Natural killer cell (primary cell): ENCODE measurements at regions of chr22 and their contacts with region 1.

Region 1: GRCh38 chr22:20981787-20982562 is at the start of gene LZTR1:
- DNase-seq: peak; percentile 77 to 81
- ATAC-seq: peak; percentile 75 to 87 (median 85)
- H3K4me3 ChIP-seq: peak within 1 kb of the TSS; percentile 78
- H3K4me3 Mint-ChIP-seq: peak within 1 kb of the TSS; percentile 92
- H3K27ac ChIP-seq: peak within 1 kb of the TSS; percentile 77
- H3K27ac Mint-ChIP-seq: peak within 1 kb of the TSS; percentile 80 to 92
- H3K4me1 ChIP-seq: peaks cover 32% of the 10 kb centered on the region
- H3K4me1 Mint-ChIP-seq: peaks cover 27 to 46% of the 10 kb centered on the region in 2 donors
- H3K27me3 ChIP-seq: no peaks in the 10 kb centered on the region
- H3K27me3 Mint-ChIP-seq: no peaks in the 10 kb centered on the region
- CTCF ChIP-seq: no peak
- total RNA-seq, gene LZTR1: 71.9 to 85.0 (median 82.0) TPM

Region 2: GRCh38 chr22:20783844-20784723 is 197.9 kb before region 1 on chr22:
- intact Hi-C with region 1: no loop called
- DNase-seq: peak in 1 of 2 donors; percentile 72
- ATAC-seq: peak; percentile 51 to 87 (median 87)
- H3K4me3 ChIP-seq: no peak overlapping the region
- H3K4me3 Mint-ChIP-seq: no peak overlapping the region
- H3K27ac ChIP-seq: no peak overlapping the region
- H3K27ac Mint-ChIP-seq: no peak overlapping the region
- H3K4me1 ChIP-seq: no peaks in the 10 kb centered on the region
- H3K4me1 Mint-ChIP-seq: no peaks in the 10 kb centered on the region
- H3K27me3 ChIP-seq: no peaks in the 10 kb centered on the region
- H3K27me3 Mint-ChIP-seq: no peaks in the 10 kb centered on the region
- CTCF ChIP-seq: peak; percentile 80

Region 3: GRCh38 chr22:20926243-20926642 is 55.7 kb before region 1 on chr22:
- intact Hi-C with region 1: loop called (anchors 2 kb)
- DNase-seq: no peak
- ATAC-seq: no peak
- H3K4me3 ChIP-seq: no peak overlapping the region
- H3K4me3 Mint-ChIP-seq: no peak overlapping the region
- H3K27ac ChIP-seq: no peak overlapping the region
- H3K27ac Mint-ChIP-seq: peak overlapping the region; percentile 64 to 76
- H3K4me1 ChIP-seq: peaks cover 44% of the 10 kb centered on the region
- H3K4me1 Mint-ChIP-seq: peaks cover 56 to 64% of the 10 kb centered on the region in 2 donors
- H3K27me3 ChIP-seq: no peaks in the 10 kb centered on the region
- H3K27me3 Mint-ChIP-seq: no peaks in the 10 kb centered on the region
- CTCF ChIP-seq: no peak

Region 4: GRCh38 chr22:21001560-21002325 is 19.8 kb after region 1 on chr22 and contains the start of gene THAP7:
- intact Hi-C with region 1: loop called (anchors 1 kb)
- DNase-seq: peak; percentile 96 to 99
- ATAC-seq: peak; percentile 88 to 96 (median 90)
- H3K4me3 ChIP-seq: peak within 1 kb of the TSS; percentile 87
- H3K4me3 Mint-ChIP-seq: peak within 1 kb of the TSS; percentile 93
- H3K27ac ChIP-seq: peak within 1 kb of the TSS; percentile 94
- H3K27ac Mint-ChIP-seq: peak within 1 kb of the TSS; percentile 98 to 99
- H3K4me1 ChIP-seq: peaks cover 35% of the 10 kb centered on the region
- H3K4me1 Mint-ChIP-seq: peaks cover 26 to 33% of the 10 kb centered on the region in 2 donors
- H3K27me3 ChIP-seq: no peaks in the 10 kb centered on the region
- H3K27me3 Mint-ChIP-seq: no peaks in the 10 kb centered on the region
- CTCF ChIP-seq: no peak
- total RNA-seq, gene THAP7: 24.1 to 40.0 (median 26.8) TPM

Region 5: DNA sequence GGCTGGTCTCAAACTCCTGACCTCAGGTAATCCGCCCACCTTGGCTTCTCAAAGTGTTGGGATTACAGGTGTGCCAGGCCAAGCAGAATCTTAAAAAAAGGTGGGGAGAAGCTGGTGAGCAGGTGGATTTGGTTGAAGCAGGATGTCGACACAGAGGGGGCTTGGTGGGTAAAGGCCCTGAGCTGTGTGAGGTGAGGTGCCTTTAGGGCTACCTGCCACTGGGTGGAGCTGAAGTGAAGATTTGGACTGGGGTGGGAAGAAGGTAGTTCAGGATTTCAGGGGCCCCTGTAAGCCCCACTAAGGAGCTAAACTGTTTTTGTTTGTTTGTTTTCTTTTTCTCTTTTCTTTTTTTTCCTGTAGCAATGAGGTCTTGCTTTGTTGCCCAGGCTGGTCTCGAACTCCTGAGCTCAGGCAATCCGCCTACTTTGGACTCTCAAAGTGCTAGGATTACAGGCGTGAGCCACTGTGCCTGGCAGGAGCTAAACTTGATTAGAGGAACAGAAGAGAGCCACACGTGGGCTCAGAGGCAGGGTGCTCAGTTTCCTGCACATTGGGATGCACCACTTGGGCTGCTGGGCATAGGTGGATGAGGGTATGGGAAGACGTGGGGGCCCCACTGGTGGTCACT is 38.9 kb after region 1 on chr22:
- intact Hi-C with region 1: no loop called
- DNase-seq: peak in 1 of 2 donors; percentile 49
- ATAC-seq: peak in 2 of 3 donors; percentile 52 to 69
- H3K4me3 ChIP-seq: no peak overlapping the region
- H3K4me3 Mint-ChIP-seq: no peak overlapping the region
- H3K27ac ChIP-seq: no peak overlapping the region
- H3K27ac Mint-ChIP-seq: no peak overlapping the region
- H3K4me1 ChIP-seq: peaks cover 11% of the 10 kb centered on the region
- H3K4me1 Mint-ChIP-seq: peaks cover 6 to 18% of the 10 kb centered on the region in 2 donors
- H3K27me3 ChIP-seq: no peaks in the 10 kb centered on the region
- H3K27me3 Mint-ChIP-seq: no peaks in the 10 kb centered on the region
- CTCF ChIP-seq: no peak

Region 6: GRCh38 chr22:21045585-21046294 is 63.8 kb after region 1 on chr22 and contains the start of gene LRRC74B:
- intact Hi-C with region 1: loop called (anchors 1 kb)
- DNase-seq: peak; percentile 76 to 77
- ATAC-seq: peak; percentile 89 to 99 (median 94)
- H3K4me3 ChIP-seq: no peak within 1 kb of the TSS
- H3K4me3 Mint-ChIP-seq: peak within 1 kb of the TSS; percentile 78
- H3K27ac ChIP-seq: no peak within 1 kb of the TSS
- H3K27ac Mint-ChIP-seq: peak within 1 kb of the TSS; percentile 81 to 94
- H3K4me1 ChIP-seq: peaks cover 25% of the 10 kb centered on the region
- H3K4me1 Mint-ChIP-seq: peaks cover 17 to 33% of the 10 kb centered on the region in 2 donors
- H3K27me3 ChIP-seq: no peaks in the 10 kb centered on the region
- H3K27me3 Mint-ChIP-seq: peaks cover 17 to 18% of the 10 kb centered on the region in 2 donors
- CTCF ChIP-seq: no peak
- total RNA-seq, gene LRRC74B: 0.11 TPM in 1 of 3 donors, not detected in the others